Heart right ventricle (tissue), 16 donors: ENCODE measurements at regions of chr12 and their contacts with region 1.

Region 1: GRCh38 chr12:27667540-27667939 is 28.7 kb upstream of the REP15 start:
- DNase-seq: no peak
- ATAC-seq: peak in 6 of 8 donors; percentile 25 to 94 (median 65)
- H3K4me3 ChIP-seq: no peak overlapping the region
- H3K27ac ChIP-seq: peak overlapping the region in 3 of 10 donors; percentile 1 to 30 (median 9)
- H3K4me1 ChIP-seq: peaks cover 0 to 18% (median 10%) of the 10 kb centered on the region in 9 donors
- H3K27me3 ChIP-seq: no peaks in the 10 kb centered on the region
- CTCF ChIP-seq: no peak

Region 2: GRCh38 chr12:27324530-27324929 is 343.0 kb before region 1 on chr12:
- intact Hi-C with region 1: loop called in 2 of 10 experiments (anchors 10 kb)
- DNase-seq: no peak
- ATAC-seq: no peak
- H3K4me3 ChIP-seq: no peak overlapping the region
- H3K27ac ChIP-seq: no peak overlapping the region
- H3K4me1 ChIP-seq: no peaks in the 10 kb centered on the region
- H3K27me3 ChIP-seq: no peaks in the 10 kb centered on the region
- CTCF ChIP-seq: no peak

Region 3: GRCh38 chr12:27488479-27488878 is 179.1 kb before region 1 on chr12:
- intact Hi-C with region 1: no loop called
- DNase-seq: no peak
- ATAC-seq: no peak
- H3K4me3 ChIP-seq: no peak overlapping the region
- H3K27ac ChIP-seq: no peak overlapping the region
- H3K4me1 ChIP-seq: no peaks in the 10 kb centered on the region
- H3K27me3 ChIP-seq: no peaks in the 10 kb centered on the region
- CTCF ChIP-seq: peak in 1 of 9 donors; percentile 14

Region 4: GRCh38 chr12:29317556-29318363 is 1650.2 kb after region 1 on chr12:
- intact Hi-C with region 1: no loop called
- DNase-seq: peak; percentile 18 to 65
- ATAC-seq: peak; percentile 94 to 99 (median 96)
- H3K4me3 ChIP-seq: peak overlapping the region in 6 of 10 donors; percentile 23 to 41 (median 30)
- H3K27ac ChIP-seq: peak overlapping the region in 9 of 10 donors; percentile 7 to 80 (median 69)
- H3K4me1 ChIP-seq: peaks cover 0 to 39% (median 11%) of the 10 kb centered on the region in 9 donors
- H3K27me3 ChIP-seq: no peaks in the 10 kb centered on the region
- CTCF ChIP-seq: peak; percentile 48 to 96 (median 85)